Activated CD8-positive, alpha-beta memory T cell treated with anti-CD3 and anti-CD28 coated beads, Interleukin-2, amount 10 ng/mL, durations not matched to agents 7 days and 5 days (primary cell): ENCODE measurements at regions of chr1 and their contacts with region 1.

Region 1: GRCh38 chr1:26279456-26280332 is at the start of gene SH3BGRL3:
- DNase-seq: peak; percentile 90
- ATAC-seq: peak; percentile 66
- H3K4me3 Mint-ChIP-seq: peak within 1 kb of the TSS; percentile 89
- H3K27ac Mint-ChIP-seq: peak within 1 kb of the TSS; percentile 99
- H3K4me1 Mint-ChIP-seq: peaks cover 84% of the 10 kb centered on the region
- H3K27me3 Mint-ChIP-seq: no peaks in the 10 kb centered on the region
- total RNA-seq, gene SH3BGRL3: 562 to 632 TPM

Region 2: DNA sequence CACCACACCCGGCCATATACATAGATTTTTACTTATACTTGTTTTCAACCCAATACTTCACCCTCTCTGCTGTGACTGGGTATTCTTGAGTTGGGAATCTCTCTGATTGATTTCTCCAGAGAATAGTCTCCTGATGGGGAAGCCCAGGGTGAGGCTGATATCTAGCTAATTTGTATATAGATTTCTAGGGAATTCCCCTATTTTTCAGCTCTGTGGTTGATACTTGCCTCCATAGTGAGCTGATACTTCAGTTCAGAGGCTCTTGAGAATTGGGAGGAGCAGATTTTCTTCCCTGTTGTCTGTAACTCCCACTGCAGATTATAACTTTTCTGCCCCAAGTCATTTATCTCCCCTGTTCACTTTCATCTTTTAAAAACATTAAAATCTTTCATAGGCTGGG is 14.3 kb before region 1 on chr1:
- CTCF ChIA-PET with region 1: interaction called, 21 read pairs
- DNase-seq: no peak
- ATAC-seq: no peak
- H3K4me3 Mint-ChIP-seq: no peak overlapping the region
- H3K27ac Mint-ChIP-seq: no peak overlapping the region
- H3K4me1 Mint-ChIP-seq: peaks cover 2% of the 10 kb centered on the region
- H3K27me3 Mint-ChIP-seq: no peaks in the 10 kb centered on the region

Region 3: DNA sequence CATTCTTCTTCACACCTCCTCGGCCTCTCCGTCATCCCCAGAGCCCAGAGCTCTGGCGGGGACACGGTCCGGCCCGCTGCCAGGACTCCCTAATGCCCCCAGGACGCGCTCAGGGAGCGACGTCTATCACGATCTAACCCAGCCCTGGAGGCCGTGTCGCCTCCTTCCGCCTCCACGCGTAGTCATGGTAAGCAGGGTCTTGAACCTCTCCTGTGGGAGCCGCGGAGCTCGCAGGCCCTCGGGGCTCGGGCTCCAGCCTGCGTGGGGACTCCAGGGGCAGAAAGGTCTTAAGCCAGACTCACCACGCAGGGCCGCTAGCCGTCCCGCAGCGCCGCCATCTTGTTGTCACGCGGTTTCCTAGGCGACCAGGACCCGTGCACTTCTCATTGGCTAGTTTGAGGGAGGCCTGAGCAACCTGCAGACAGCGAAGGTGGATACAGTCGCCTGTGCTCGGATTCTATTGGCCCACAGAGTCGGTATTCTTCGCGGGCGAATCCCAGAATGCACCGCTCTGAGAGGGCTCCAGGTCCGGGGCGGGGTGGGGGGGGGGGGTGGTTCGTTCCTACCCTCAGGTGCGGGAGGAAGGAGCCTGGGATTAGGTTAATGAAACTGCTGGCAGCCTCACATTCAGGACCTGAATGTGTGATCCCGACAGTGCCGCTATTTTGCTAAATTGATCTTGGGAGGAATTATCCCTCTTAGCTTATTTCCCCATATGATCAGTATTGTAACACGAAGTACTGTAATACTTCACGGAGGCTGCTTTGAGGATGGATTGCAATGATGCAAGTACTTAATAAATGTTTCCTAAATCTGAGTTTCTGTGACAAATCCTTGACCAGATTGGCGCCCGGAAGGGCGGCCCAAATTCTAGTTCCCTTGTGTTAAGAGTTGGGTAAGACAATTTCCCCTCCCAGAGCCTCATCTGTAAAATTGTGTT is 26.9 kb after region 1 on chr1 and contains the start of gene UBXN11:
- CTCF ChIA-PET with region 1: interaction called, 1,010 read pairs
- DNase-seq: peak; percentile 98
- ATAC-seq: peak; percentile 99
- H3K4me3 Mint-ChIP-seq: peak within 1 kb of the TSS; percentile 86
- H3K27ac Mint-ChIP-seq: peak within 1 kb of the TSS; percentile 91
- H3K4me1 Mint-ChIP-seq: peaks cover 33% of the 10 kb centered on the region
- H3K27me3 Mint-ChIP-seq: no peaks in the 10 kb centered on the region
- total RNA-seq, gene UBXN11: 27.7 to 39.3 TPM

Region 4: GRCh38 chr1:26358411-26359384 is 79.0 kb after region 1 on chr1:
- CTCF ChIA-PET with region 1: interaction called, 114 read pairs
- DNase-seq: peak; percentile 93
- ATAC-seq: peak; percentile 89
- H3K4me3 Mint-ChIP-seq: peak overlapping the region; percentile 48
- H3K27ac Mint-ChIP-seq: peak overlapping the region; percentile 66
- H3K4me1 Mint-ChIP-seq: peaks cover 51% of the 10 kb centered on the region
- H3K27me3 Mint-ChIP-seq: peaks cover 13% of the 10 kb centered on the region

Region 5: DNA sequence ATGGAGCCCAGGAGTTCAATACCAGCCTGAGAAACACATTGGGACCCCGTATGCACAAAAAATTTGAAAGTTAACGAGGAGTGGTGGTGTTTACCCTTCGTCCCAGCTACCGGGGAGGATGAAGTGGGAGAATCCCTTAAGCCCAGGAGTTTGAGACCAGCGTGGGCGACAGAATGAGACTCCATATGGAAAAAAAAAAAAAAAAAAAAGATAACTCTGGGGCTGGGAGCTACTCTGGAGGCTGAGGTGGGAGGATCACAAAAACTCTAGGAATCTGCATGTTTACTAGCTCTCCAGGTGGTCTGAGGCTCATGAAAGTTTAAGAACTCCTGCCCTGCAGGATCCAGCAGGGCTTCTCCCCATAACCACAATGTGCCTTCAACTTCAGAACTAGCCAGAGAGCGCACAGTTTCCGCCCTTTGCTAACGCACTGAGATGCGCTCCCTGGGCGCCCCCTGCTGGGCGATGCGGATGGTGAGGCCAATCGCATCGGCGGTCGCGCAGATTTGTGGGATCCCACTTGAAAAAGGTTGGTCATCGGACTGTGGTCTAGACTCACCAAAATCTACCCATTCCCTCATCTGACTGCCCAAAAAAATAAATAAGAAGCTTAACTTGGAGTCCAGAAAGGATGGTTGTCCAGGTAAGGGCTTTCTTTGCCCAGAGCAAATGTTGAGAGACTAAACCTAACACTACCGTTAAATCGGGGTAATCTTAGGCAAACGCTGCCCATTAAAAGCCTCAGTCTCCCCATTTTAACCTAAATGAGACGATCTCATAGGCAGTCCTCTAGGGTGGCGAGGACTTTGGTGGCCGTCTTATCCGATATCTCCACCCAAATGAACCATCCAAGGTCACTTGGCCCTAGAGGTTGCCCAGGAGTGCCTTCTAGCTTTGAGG is 84.1 kb after region 1 on chr1:
- CTCF ChIA-PET with region 1: interaction called, 114 read pairs
- DNase-seq: peak; percentile 90
- ATAC-seq: peak; percentile 76
- H3K4me3 Mint-ChIP-seq: peak overlapping the region; percentile 7
- H3K27ac Mint-ChIP-seq: peak overlapping the region; percentile 72
- H3K4me1 Mint-ChIP-seq: peaks cover 53% of the 10 kb centered on the region
- H3K27me3 Mint-ChIP-seq: peaks cover 23% of the 10 kb centered on the region

Region 6: GRCh38 chr1:26378088-26378878 is 98.6 kb after region 1 on chr1:
- CTCF ChIA-PET with region 1: interaction called, 100 read pairs
- DNase-seq: peak; percentile 96
- ATAC-seq: peak; percentile 96
- H3K4me3 Mint-ChIP-seq: peak overlapping the region; percentile 29
- H3K27ac Mint-ChIP-seq: peak overlapping the region; percentile 87
- H3K4me1 Mint-ChIP-seq: peaks cover 75% of the 10 kb centered on the region
- H3K27me3 Mint-ChIP-seq: peaks cover 2% of the 10 kb centered on the region

Region 7: DNA sequence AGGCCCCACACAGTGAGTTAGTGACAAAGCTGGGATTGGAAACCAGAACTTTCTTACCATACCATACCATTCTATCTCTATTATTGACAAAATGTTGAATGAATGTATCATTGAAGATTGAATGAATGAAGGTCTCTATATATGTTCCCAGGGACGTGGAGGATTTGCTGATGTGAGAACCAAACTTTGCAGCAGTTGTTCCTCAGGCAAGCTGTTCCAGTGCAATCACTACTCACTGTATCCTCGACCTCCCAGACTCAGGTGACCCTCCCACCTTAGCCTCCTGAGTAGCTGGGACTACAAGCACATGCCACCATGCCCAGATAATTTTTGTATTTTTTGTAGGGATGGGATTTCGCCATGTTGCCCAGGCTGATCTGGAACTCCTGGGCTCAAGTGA is 119.3 kb after region 1 on chr1:
- CTCF ChIA-PET with region 1: interaction called, 62 read pairs
- DNase-seq: no peak
- ATAC-seq: no peak
- H3K4me3 Mint-ChIP-seq: no peak overlapping the region
- H3K27ac Mint-ChIP-seq: no peak overlapping the region
- H3K4me1 Mint-ChIP-seq: peaks cover 5% of the 10 kb centered on the region
- H3K27me3 Mint-ChIP-seq: peaks cover 20% of the 10 kb centered on the region

Region 8: GRCh38 chr1:26560403-26560780 is 280.7 kb after region 1 on chr1:
- CTCF ChIA-PET with region 1: no interaction called
- DNase-seq: no peak
- ATAC-seq: no peak
- H3K4me3 Mint-ChIP-seq: no peak overlapping the region
- H3K27ac Mint-ChIP-seq: no peak overlapping the region
- H3K4me1 Mint-ChIP-seq: peaks cover 8% of the 10 kb centered on the region
- H3K27me3 Mint-ChIP-seq: no peaks in the 10 kb centered on the region